ENCODE measurements at regions of chr19 and their contacts with region 1.

Region 1: GRCh38 chr19:11798391-11799330 is at the start of gene ZNF491:
- DNase-seq: peak; percentile 83
- H3K4me3 Mint-ChIP-seq: peak within 1 kb of the TSS; percentile 79
- H3K27ac Mint-ChIP-seq: peak within 1 kb of the TSS; percentile 54
- H3K4me1 Mint-ChIP-seq: peaks cover 15% of the 10 kb centered on the region
- H3K27me3 Mint-ChIP-seq: peaks cover 3% of the 10 kb centered on the region
- total RNA-seq, gene ZNF491: 0.80 to 0.98 TPM

Region 2: GRCh38 chr19:11814029-11814699 is 15.5 kb after region 1 on chr19 and contains the start of gene ZNF440:
- CTCF ChIA-PET with region 1: interaction called, 22 read pairs
- POLR2A ChIA-PET with region 1: interaction called, 7 read pairs
- DNase-seq: peak; percentile 90
- H3K4me3 Mint-ChIP-seq: peak within 1 kb of the TSS; percentile 85
- H3K27ac Mint-ChIP-seq: peak within 1 kb of the TSS; percentile 75
- H3K4me1 Mint-ChIP-seq: peaks cover 18% of the 10 kb centered on the region
- H3K27me3 Mint-ChIP-seq: no peaks in the 10 kb centered on the region
- total RNA-seq, gene ZNF440: 11.9 to 14.7 TPM

Measured in activated CD4-positive, alpha-beta memory T cell treated with anti-CD3 and anti-CD28 coated beads, Interleukin-2, amount 10 ng/mL, durations not matched to agents 7 days and 5 days (primary cell).